ENCODE measurements at regions of chr12 and their contacts with region 1.

Region 1: DNA sequence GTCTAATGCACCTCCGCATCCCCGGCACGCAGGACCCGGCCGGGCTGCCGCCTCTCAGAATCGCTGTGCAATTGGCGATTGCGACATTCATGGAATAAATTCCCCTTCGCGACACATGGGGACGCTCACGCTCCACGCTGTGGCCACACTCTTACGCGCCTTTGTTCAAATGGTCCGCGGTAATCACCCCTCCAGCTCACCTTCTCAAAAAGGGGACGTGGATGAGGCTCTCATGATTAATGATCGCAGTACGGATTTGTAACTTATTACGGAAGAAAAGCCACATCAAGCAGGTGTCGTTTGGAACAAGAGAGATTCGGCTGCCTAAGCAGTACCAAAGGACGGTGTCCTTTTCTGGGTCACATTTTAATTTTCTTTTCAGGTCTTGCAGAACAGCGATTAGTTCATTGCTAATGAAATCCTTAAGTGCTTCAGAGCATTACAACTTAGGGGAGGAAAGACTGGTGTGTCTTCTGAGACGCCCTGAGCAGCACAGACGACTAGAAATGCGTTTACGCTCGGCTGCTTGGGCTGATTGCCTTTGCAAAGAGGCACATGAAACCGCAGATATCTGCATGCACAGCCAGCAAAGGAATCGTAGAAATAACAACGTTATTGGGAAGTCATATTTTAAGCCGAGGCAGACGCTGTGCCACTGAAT is 37.3 kb upstream of the ADGRD1 start:
- DNase-seq: peak; percentile 64
- H3K4me3 Mint-ChIP-seq: no peak overlapping the region
- H3K27ac Mint-ChIP-seq: no peak overlapping the region
- H3K4me1 Mint-ChIP-seq: no peaks in the 10 kb centered on the region
- H3K27me3 Mint-ChIP-seq: peaks cover 28% of the 10 kb centered on the region

Region 2: DNA sequence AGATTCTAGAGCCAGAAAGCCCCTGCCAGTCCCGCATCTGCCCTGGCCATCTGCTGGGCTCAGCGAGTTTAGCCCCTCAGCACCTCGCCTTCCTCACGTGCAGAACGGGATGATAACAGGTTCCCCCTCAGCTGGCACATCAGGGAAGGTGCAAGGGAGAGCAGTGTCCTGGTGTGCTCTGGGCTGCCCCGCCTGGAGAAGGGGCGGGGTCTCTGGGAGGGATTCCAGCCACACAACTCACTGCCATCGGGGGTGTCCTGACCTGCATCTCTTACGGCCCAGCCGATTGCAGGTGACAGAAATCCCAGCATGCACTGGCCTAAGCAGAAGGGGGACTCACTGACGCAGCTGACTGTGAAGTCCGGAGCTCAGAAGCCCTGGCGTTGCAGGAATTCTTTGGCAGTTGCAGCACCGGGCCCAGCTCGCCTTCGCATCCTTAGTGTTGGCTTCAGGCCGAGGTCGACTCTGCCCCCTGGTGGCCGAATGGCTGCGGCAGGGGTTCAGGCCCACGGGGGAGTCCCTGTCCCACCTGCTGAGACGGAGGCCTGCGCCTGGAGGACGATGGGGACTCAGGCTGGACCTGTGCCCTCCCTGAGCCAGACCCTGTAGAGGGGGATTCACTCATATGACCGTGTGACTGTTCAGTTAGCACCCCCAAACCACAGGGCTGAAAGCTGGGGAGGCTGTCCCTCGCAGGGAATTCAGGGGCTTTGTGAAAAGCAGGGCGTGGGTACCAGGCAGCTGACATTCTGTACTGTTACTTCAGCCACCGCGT is 215.9 kb after region 1 on chr12:
- intact Hi-C with region 1: loop called (anchors 10 kb)
- DNase-seq: peak; percentile 88
- H3K4me3 Mint-ChIP-seq: no peak overlapping the region
- H3K27ac Mint-ChIP-seq: no peak overlapping the region
- H3K4me1 Mint-ChIP-seq: no peaks in the 10 kb centered on the region
- H3K27me3 Mint-ChIP-seq: no peaks in the 10 kb centered on the region